Mammary epithelial cell (primary cell): ENCODE measurements at regions of chr1 and their contacts with region 1.

Region 1: DNA sequence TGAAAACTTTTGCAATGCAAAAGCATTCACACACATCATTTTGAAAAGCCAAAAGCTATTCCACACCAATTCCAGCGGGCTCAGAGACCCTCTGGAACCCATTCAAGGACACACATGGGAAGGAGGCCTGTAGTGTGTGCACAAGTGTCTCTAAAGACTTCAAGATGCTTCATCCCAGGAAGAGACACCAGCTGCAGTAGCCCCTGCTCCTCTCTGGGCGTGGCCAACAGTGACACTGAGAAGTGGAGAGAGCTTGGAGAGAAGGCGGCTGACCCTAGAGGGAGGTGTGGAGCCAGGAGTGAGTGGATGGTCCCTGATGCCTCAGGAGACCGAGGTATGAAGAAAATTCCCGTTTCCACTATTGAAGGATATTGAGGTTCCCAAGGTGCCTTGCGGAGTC is 14.9 kb upstream of the TNNI1 start:
- DNase-seq: no peak
- H3K4me3 ChIP-seq: no peak overlapping the region
- H3K27ac ChIP-seq: no peak overlapping the region
- H3K4me1 ChIP-seq: peaks cover 13% of the 10 kb centered on the region
- H3K27me3 ChIP-seq: no peaks in the 10 kb centered on the region
- CTCF ChIP-seq: no peak

Region 2: DNA sequence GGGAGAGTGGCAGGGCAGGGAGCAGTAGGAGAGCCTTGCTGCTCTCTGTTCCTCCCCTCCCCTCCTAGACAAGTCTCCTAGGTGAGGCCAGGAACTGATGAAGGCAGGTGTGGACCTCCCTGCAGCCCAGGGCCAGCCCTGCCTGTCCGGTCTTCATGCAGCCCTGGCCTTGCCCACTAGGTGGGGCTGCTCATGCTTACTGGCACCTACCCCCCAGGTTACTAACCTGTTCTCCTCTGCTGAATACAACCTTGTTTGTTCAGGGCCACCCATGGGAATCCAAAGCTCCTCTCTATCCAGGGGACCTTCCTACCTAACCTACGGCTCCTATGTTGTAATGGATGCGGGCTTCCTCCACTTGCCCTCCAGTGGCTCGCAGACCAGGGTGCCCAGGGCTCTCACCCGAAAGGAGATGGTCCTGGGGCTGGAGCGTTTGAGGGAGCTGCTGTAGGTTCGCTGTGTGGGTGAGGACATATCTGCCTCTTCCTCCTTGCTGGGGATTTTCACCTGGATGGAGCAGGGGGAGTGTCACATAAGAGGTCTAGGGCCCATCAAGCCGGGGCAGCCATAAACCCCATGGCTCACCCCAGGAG is 51.0 kb before region 1 on chr1:
- CTCF ChIA-PET with region 1: no interaction called
- dilution Hi-C with region 1: no loop called
- in situ Hi-C with region 1: no loop called
- intact Hi-C with region 1: loop called (anchors 1 kb)
- DNase-seq: peak; percentile 54
- H3K4me3 ChIP-seq: no peak overlapping the region
- H3K27ac ChIP-seq: no peak overlapping the region
- H3K4me1 ChIP-seq: no peaks in the 10 kb centered on the region
- H3K27me3 ChIP-seq: no peaks in the 10 kb centered on the region
- CTCF ChIP-seq: peak; percentile 90 to 95

Region 3: DNA sequence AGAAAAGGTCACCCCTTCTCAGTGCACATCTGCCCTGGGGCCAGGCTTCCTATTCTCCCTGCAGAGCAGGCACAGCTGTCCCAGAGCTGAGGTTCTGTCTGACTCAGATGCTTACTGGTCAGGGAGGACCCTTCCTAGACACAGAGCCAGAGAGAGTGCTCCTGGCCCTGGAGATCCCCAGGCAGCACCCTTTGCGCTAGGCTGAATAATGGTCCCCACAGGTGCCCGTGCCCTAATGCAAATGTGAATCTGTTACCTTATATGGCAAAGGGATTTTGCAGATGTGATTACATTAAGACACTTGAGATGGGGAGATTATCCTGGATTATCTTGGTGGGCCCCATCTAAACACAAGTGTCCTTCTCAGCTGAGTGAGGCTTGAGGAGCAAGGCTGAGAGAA is 12.2 kb before region 1 on chr1:
- CTCF ChIA-PET with region 1: no interaction called
- dilution Hi-C with region 1: no loop called
- in situ Hi-C with region 1: no loop called
- intact Hi-C with region 1: no loop called
- DNase-seq: no peak
- H3K4me3 ChIP-seq: no peak overlapping the region
- H3K27ac ChIP-seq: no peak overlapping the region
- H3K4me1 ChIP-seq: no peaks in the 10 kb centered on the region
- H3K27me3 ChIP-seq: no peaks in the 10 kb centered on the region
- CTCF ChIP-seq: no peak

Region 4: DNA sequence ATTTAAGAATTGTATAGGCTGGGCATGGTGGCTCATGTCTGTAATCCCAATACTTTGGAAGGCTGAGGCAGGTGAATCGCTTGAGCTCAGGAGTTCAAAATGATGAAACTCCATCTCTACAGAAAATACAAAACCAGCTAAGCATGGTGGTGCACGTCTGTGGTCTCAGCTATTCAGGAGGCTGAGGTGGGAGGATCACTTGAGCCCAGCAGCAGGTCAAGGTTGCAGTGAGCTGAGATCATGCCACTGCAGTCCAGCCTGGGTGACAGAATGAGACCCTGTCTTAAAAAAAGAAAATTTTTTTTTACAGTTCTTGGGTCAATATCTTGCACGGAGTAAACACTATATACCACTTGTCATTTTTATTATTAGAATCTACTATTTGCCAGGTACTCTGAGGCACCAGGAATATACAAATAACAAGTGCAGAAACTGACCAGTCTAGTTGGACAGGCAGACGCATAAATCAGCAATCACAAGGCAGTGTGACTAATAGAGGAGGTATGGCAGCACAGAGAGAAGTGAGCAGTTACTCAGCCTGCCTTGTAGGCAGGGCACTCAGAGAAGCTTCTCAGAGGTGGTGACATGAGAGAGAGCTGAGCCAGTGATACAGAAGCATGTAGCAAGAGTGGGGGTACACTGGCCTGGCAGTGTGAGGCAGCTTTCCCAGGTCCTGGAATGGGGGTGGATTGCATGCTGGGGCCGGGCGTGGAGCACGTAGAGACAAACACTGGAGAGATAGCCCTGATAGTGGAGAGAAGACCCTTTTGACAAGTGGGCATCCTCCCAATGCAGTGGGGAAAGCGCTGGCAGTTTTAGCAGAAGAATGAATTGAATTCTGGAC is 24.6 kb after region 1 on chr1:
- CTCF ChIA-PET with region 1: interaction called, 5 read pairs
- dilution Hi-C with region 1: no loop called
- in situ Hi-C with region 1: no loop called
- intact Hi-C with region 1: loop called (anchors 1 kb)
- DNase-seq: peak; percentile 99
- H3K4me3 ChIP-seq: peak overlapping the region in 1 of 3 experiments; percentile 14
- H3K27ac ChIP-seq: peak overlapping the region; percentile 98
- H3K4me1 ChIP-seq: peaks cover 78% of the 10 kb centered on the region
- H3K27me3 ChIP-seq: no peaks in the 10 kb centered on the region
- CTCF ChIP-seq: no peak

Region 5: DNA sequence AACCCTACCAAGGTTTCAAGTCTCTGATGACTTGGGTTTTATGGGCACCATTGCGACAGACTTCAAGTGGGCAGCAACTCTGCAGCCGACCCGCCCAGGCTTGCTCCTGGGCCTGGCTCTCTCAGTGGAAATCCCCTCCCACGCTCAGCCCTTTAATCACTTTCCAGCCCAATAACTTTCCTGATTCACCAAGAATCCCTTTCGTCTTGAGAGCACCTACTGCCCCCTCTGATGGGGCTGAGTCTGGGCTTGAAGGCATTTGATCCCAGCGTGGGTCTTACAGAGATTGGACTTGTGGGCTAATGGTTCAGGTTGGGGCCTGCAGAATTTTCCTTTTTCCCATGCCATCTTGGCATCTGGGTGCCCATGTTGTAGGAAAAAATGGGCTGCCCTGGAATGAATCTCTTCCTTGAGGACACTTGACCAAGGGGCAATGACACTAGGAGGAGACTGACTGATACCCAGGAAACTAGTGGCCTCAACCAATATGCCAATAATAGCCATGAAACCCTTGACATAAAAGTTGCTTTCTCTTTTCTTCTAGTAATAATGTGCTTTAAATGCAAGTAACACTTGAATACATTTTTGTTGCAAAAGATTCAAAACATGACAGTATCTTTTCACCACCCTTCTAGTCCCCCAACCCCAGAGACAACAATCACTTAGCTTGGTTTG is 40.4 kb after region 1 on chr1:
- CTCF ChIA-PET with region 1: interaction called, 6 read pairs
- dilution Hi-C with region 1: loop called (anchors 5 kb)
- in situ Hi-C with region 1: no loop called
- intact Hi-C with region 1: loop called (anchors 1 kb)
- DNase-seq: peak; percentile 99
- H3K4me3 ChIP-seq: no peak overlapping the region
- H3K27ac ChIP-seq: peak overlapping the region; percentile 97
- H3K4me1 ChIP-seq: peaks cover 58% of the 10 kb centered on the region
- H3K27me3 ChIP-seq: no peaks in the 10 kb centered on the region
- CTCF ChIP-seq: peak in 1 of 2 donors; percentile 39

Region 6: GRCh38 chr1:201511941-201512539 is 75.6 kb after region 1 on chr1:
- CTCF ChIA-PET with region 1: interaction called, 6 read pairs
- dilution Hi-C with region 1: no loop called
- in situ Hi-C with region 1: loop called in 1 of 2 experiments (anchors 10 kb)
- intact Hi-C with region 1: loop called (anchors 1 kb)
- DNase-seq: no peak
- H3K4me3 ChIP-seq: no peak overlapping the region
- H3K27ac ChIP-seq: no peak overlapping the region
- H3K4me1 ChIP-seq: peaks cover 36% of the 10 kb centered on the region
- H3K27me3 ChIP-seq: no peaks in the 10 kb centered on the region
- CTCF ChIP-seq: no peak